ENCODE measurements at regions of chr4 and their contacts with region 1.

Region 1: GRCh38 chr4:83947830-83948193 is 411.9 kb downstream of the GPAT3 start:
- DNase-seq: no peak
- H3K4me3 ChIP-seq: no peak overlapping the region
- CTCF ChIP-seq: no peak

Region 2: DNA sequence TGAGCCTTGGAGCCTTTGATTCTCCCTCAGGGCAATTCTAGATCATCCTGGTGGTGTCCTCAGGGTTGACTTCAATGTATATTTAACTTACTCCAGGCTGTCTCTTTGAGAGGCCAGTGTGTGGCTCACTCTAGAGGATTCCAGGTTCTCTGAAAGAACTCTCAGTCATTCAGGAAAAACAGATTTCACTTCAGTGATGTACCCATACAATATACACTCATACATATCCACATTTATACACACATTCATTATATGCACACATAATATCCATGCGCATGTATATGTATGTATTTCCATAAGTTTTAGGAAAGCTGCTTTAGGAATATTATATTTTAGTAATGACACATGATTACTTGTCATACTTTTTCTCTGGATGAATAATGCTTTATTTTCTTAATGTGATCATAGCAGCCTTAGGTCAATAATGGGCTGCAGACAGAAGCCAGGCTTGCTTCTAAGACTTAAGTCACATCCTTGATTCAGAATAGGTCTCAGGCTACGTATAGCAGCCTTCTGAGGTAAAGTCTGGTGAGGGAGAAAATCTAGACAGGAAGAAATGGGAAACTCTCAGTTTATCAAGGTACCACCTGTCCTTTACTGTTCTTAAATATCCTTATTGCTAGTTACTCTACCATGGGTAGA is 14.9 kb before region 1 on chr4:
- CTCF ChIA-PET with region 1: no interaction called
- POLR2A ChIA-PET with region 1: no interaction called
- DNase-seq: no peak
- H3K4me3 ChIP-seq: no peak overlapping the region
- CTCF ChIP-seq: no peak

Region 3: GRCh38 chr4:83961575-83961974 is 13.8 kb after region 1 on chr4:
- CTCF ChIA-PET with region 1: interaction called, 36 read pairs
- POLR2A ChIA-PET with region 1: no interaction called
- DNase-seq: no peak
- H3K4me3 ChIP-seq: no peak overlapping the region
- CTCF ChIP-seq: peak; percentile 17

Region 4: GRCh38 chr4:83974156-83974780 is 26.5 kb after region 1 on chr4:
- CTCF ChIA-PET with region 1: no interaction called
- POLR2A ChIA-PET with region 1: no interaction called
- DNase-seq: no peak
- H3K4me3 ChIP-seq: no peak overlapping the region
- CTCF ChIP-seq: no peak